Activated CD8-positive, alpha-beta memory T cell treated with anti-CD3 and anti-CD28 coated beads, Interleukin-2, amount 10 ng/mL, durations not matched to agents 7 days and 5 days (primary cell): ENCODE measurements at regions of chr20 and their contacts with region 1.

Region 1: DNA sequence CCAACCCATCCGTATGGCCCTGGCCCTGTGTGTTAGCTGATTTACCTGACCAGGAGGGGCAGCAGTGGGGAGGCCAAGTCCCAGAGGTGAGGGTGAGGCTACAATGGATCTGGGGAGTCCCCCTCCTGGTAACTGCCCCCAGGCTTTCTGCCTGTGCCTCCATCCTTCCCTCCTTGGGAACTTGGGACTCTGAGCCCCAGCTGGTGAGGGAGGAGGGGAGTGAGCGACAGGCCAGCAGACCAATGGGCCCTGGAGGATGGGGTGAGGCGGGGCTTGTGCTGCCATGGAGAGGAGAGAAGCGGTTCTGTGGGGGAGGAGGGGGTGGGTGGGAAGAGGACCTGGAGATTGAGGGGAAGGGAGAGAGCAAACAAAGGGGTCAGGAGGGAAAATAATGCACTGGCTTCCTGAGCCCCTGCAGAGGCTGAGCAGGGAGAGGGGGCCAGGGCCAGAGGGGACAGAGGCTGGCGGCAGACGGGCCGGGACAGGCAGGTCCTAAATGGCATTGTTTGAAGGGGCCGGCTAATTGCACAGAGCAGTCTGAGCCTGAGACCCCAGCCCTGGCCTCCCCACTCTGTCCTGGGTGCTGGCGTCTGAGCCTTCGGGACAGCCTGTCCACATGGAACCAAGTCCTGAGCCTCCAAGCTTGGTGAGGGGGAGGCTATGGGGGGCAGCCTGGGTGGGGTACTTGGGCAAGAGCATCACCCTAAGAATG is 17.5 kb downstream of the DNMT3B start:
- DNase-seq: no peak
- ATAC-seq: no peak
- H3K4me3 Mint-ChIP-seq: no peak overlapping the region
- H3K27ac Mint-ChIP-seq: no peak overlapping the region
- H3K4me1 Mint-ChIP-seq: peaks cover 4% of the 10 kb centered on the region
- H3K27me3 Mint-ChIP-seq: no peaks in the 10 kb centered on the region

Region 2: DNA sequence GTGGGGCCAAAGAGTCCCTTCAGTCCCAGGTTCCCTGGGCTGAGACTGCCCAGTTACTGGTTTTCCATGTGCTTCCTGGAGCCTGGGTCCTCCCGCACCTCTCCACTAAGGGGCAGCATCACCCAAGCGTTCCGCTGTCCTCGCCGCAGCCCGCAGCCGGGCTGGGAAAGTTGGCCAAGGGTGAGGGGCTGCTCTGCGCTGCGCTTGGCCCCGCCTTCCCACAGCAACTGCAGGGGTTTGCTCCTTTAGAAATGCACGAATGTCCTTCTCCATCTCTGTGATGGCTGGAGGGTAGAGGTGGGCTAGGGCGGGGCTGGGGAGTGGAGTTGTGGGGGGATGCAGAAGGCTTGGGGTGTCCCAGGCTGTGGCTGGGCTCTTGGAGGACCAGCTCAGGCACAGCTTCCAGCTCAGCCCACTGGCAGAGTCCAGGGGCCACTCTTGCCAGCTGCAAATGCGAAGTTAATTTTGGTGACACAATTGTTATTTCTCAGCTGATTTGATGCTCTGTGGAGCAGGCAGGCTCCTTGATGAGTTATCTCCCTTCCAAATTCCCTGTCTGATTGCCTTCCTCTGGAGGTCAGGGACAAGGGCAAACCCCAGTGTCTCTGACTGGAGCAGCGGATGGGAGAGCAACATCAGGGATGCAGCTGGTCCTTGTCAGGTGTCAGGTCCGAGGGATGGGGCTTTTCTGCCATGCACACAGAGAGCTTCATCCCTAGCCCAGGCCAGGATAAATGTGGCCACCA is 257.7 kb before region 1 on chr20:
- CTCF ChIA-PET with region 1: interaction called, 13 read pairs
- DNase-seq: peak; percentile 70
- ATAC-seq: peak; percentile 88
- H3K4me3 Mint-ChIP-seq: no peak overlapping the region
- H3K27ac Mint-ChIP-seq: peak overlapping the region; percentile 59
- H3K4me1 Mint-ChIP-seq: peaks cover 52% of the 10 kb centered on the region
- H3K27me3 Mint-ChIP-seq: no peaks in the 10 kb centered on the region

Region 3: GRCh38 chr20:32610472-32611218 is 169.0 kb before region 1 on chr20:
- CTCF ChIA-PET with region 1: no interaction called
- DNase-seq: no peak
- ATAC-seq: no peak
- H3K4me3 Mint-ChIP-seq: no peak overlapping the region
- H3K27ac Mint-ChIP-seq: no peak overlapping the region
- H3K4me1 Mint-ChIP-seq: no peaks in the 10 kb centered on the region
- H3K27me3 Mint-ChIP-seq: no peaks in the 10 kb centered on the region

Region 4: GRCh38 chr20:32681175-32682084 is 98.2 kb before region 1 on chr20:
- CTCF ChIA-PET with region 1: interaction called, 334 read pairs
- DNase-seq: no peak
- ATAC-seq: peak; percentile 66
- H3K4me3 Mint-ChIP-seq: no peak overlapping the region
- H3K27ac Mint-ChIP-seq: peak overlapping the region; percentile 49
- H3K4me1 Mint-ChIP-seq: peaks cover 19% of the 10 kb centered on the region
- H3K27me3 Mint-ChIP-seq: no peaks in the 10 kb centered on the region

Region 5: DNA sequence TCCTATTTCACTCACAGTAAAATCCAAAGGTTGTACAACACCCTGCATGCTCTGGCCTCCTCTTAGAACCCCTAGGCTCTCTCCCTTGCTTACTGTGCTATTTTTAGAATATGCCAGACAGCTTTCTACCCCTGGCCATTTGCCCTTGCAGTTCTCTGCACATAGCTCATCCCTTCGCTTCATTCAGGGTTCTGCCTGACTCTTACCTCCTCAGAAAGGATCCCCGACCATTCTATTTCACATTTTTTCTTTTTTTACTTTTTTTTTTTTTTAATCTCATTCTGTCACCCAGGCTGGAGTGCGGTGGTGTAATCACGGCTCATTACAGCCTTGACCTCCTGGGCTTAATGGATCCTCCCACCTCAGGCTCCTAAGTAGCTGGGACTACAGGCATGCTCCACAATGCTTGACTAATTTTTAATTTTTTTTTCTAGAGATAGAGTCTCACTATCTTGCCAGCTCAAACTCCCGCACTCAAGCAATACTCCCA is 70.0 kb before region 1 on chr20:
- CTCF ChIA-PET with region 1: interaction called, 12 read pairs
- DNase-seq: no peak
- ATAC-seq: no peak
- H3K4me3 Mint-ChIP-seq: no peak overlapping the region
- H3K27ac Mint-ChIP-seq: no peak overlapping the region
- H3K4me1 Mint-ChIP-seq: no peaks in the 10 kb centered on the region
- H3K27me3 Mint-ChIP-seq: no peaks in the 10 kb centered on the region

Region 6: DNA sequence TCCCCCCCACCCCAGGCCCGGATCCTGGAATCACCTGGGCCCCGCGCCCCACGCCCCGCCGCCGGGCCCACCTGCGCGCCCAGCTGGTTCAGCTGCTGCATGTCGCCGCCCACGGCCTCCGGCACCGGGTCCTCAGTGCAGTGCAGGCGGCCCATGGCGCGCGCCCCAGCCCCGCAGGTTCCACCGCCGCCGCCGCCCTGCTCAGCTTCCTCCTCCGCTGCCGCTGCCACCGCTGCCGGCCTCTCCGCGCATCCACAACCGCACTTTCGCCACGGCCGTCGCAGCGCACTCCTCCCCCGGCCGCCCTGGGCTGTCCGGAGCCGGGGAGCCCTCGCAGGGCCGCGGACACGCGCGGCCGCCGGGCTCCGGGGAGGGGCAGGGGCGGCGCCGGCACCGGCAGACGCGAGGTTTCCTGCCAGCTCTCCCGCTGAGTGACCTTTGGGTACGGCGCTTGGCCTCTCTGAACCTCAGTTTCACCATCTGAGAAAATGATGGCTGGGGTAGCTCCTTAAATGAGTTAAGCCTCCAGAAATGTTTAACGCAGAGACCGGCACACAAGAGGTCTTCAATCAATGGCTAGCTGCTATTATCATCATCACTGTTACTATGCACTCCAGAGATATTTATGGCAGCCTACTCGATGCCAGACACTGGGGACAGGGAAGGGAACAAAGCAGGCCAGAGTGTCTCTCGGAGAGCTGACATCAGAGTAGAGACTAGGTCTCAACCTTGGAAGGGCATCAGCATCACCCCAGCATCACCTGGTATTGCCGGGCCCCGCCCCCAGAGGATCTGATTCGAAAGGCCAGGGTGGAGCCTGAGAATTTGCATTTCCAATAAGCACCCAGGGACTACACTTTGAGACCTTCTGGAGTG is 36.2 kb before region 1 on chr20 and contains the start of gene COMMD7:
- CTCF ChIA-PET with region 1: interaction called, 34 read pairs
- DNase-seq: peak; percentile 87
- ATAC-seq: peak; percentile 84
- H3K4me3 Mint-ChIP-seq: peak within 1 kb of the TSS; percentile 99
- H3K27ac Mint-ChIP-seq: peak within 1 kb of the TSS; percentile 99
- H3K4me1 Mint-ChIP-seq: peaks cover 38% of the 10 kb centered on the region
- H3K27me3 Mint-ChIP-seq: no peaks in the 10 kb centered on the region
- total RNA-seq, gene COMMD7: 54.2 to 59.5 TPM

Region 7: DNA sequence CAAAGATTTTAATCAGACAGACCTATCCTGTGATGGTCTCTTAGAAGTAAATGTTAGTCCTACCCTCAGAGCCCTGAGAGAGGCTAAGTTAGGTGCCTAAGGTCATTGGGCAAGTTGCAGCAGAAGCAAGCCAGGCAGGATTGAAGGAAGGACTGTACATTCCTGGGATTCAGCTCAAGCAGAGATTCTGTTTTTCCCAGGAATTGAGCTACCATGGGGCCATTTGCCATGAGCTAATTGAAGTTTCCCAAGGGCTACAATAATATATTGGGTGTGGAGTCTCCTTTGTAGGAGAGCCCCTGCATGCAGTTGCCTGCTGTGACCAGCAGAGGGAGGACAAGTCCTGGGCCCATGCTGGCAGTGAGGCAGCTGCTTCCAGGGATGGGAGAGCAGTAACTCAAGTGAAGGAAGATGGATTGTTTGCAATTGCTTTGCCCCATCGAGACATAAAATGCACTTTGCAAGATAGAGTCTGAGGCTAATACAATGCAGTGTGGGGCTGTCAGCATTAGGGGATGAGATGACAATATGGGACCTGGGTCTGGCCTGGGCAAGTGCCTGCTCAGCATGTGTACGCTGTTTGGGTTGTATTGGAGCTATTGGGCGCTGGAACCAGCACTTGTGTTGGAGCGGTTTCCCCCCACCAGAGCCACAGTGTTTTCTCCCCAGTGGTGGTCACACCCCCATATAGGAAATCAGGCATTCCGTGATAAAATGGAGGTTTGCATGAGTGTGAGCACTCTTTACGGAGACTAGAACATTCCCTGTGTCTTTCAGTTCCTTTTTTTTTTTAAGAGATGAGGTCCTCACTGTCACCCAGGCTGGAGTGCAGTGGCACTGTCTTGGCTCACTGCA is 10.5 kb after region 1 on chr20:
- CTCF ChIA-PET with region 1: interaction called, 26 read pairs
- DNase-seq: peak; percentile 76
- ATAC-seq: peak; percentile 93
- H3K4me3 Mint-ChIP-seq: no peak overlapping the region
- H3K27ac Mint-ChIP-seq: no peak overlapping the region
- H3K4me1 Mint-ChIP-seq: peaks cover 20% of the 10 kb centered on the region
- H3K27me3 Mint-ChIP-seq: no peaks in the 10 kb centered on the region

Region 8: GRCh38 chr20:32811886-32812285 is 32.2 kb after region 1 on chr20:
- CTCF ChIA-PET with region 1: no interaction called
- DNase-seq: no peak
- ATAC-seq: no peak
- H3K4me3 Mint-ChIP-seq: no peak overlapping the region
- H3K27ac Mint-ChIP-seq: no peak overlapping the region
- H3K4me1 Mint-ChIP-seq: no peaks in the 10 kb centered on the region
- H3K27me3 Mint-ChIP-seq: no peaks in the 10 kb centered on the region